Mammary epithelial cell (primary cell): ENCODE measurements at regions of chr11 and their contacts with region 1.

Region 1: GRCh38 chr11:55054723-55055122 is 207.2 kb upstream of the TRIM48 start:
- DNase-seq: no peak
- H3K4me3 ChIP-seq: no peak overlapping the region
- H3K27ac ChIP-seq: no peak overlapping the region
- H3K4me1 ChIP-seq: no peaks in the 10 kb centered on the region
- H3K27me3 ChIP-seq: no peaks in the 10 kb centered on the region
- CTCF ChIP-seq: no peak

Region 2: GRCh38 chr11:54930930-54931329 is 123.8 kb before region 1 on chr11:
- CTCF ChIA-PET with region 1: no interaction called
- dilution Hi-C with region 1: loop called (anchors 25 kb)
- in situ Hi-C with region 1: no loop called
- intact Hi-C with region 1: no loop called
- DNase-seq: no peak
- H3K4me3 ChIP-seq: no peak overlapping the region
- H3K27ac ChIP-seq: no peak overlapping the region
- H3K4me1 ChIP-seq: no peaks in the 10 kb centered on the region
- H3K27me3 ChIP-seq: no peaks in the 10 kb centered on the region
- CTCF ChIP-seq: no peak

Region 3: GRCh38 chr11:55106391-55106790 is 51.7 kb after region 1 on chr11:
- CTCF ChIA-PET with region 1: no interaction called
- dilution Hi-C with region 1: no loop called
- in situ Hi-C with region 1: no loop called
- intact Hi-C with region 1: no loop called
- DNase-seq: no peak
- H3K4me3 ChIP-seq: no peak overlapping the region
- H3K27ac ChIP-seq: no peak overlapping the region
- H3K4me1 ChIP-seq: no peaks in the 10 kb centered on the region
- H3K27me3 ChIP-seq: no peaks in the 10 kb centered on the region
- CTCF ChIP-seq: no peak